ENCODE measurements at regions of chr17 and their contacts with region 1.

Region 1: GRCh38 chr17:36601303-36602029 is at the start of gene MRM1:
- DNase-seq: peak; percentile 46
- H3K4me3 ChIP-seq: peak within 1 kb of the TSS; percentile 97
- CTCF ChIP-seq: peak; percentile 38

Region 2: GRCh38 chr17:36545465-36546417 is 55.7 kb before region 1 on chr17:
- CTCF ChIA-PET with region 1: interaction called, 10 read pairs
- POLR2A ChIA-PET with region 1: interaction called, 3 read pairs
- DNase-seq: peak; percentile 84
- H3K4me3 ChIP-seq: peak overlapping the region; percentile 92
- CTCF ChIP-seq: no peak

Region 3: DNA sequence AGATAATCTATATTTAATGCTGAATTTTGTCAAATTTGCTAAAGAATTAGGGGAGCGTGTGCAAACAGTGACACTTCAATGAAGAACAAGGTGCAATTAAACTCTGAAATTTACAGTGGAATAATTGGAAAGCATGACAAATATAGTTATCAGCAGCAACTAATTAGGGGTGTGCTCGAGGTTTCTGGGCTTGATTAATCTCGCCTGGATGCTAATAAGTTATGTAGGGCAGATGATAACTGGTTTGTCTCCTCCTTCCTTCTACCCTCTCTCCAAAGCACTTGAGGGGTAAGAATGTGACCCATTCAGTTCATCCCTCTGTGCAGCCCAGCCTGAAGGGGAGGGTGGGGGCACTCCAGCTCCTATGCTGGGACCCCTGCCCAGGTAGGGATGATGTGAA is 21.8 kb after region 1 on chr17:
- CTCF ChIA-PET with region 1: interaction called, 27 read pairs
- POLR2A ChIA-PET with region 1: no interaction called
- DNase-seq: no peak
- H3K4me3 ChIP-seq: no peak overlapping the region
- CTCF ChIP-seq: no peak

Region 4: GRCh38 chr17:36650096-36650775 is 48.8 kb after region 1 on chr17:
- CTCF ChIA-PET with region 1: no interaction called
- POLR2A ChIA-PET with region 1: no interaction called
- DNase-seq: no peak
- H3K4me3 ChIP-seq: no peak overlapping the region
- CTCF ChIP-seq: no peak

Region 5: GRCh38 chr17:37176723-37177122 is 575.3 kb after region 1 on chr17:
- CTCF ChIA-PET with region 1: interaction called, 14 read pairs
- POLR2A ChIA-PET with region 1: no interaction called
- DNase-seq: no peak
- H3K4me3 ChIP-seq: no peak overlapping the region
- CTCF ChIP-seq: no peak

Region 6: DNA sequence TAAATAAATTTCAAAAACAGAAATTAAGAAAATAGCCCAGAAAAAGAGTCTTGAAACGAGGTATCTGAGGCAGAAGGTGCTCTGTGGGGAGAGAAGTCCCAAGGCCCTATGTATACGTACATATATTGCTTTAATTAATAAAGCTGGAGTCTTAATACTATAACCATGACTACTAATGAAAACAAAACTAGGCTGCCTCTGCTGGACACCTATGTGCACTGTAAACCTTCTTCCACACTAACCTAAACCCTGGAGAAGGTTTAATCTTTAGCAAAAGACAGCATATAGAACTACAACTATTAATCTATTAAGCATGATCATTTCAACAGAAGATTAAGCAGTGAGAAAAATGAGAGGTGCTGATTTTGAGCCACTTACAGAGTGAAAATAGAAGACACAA is 620.4 kb after region 1 on chr17:
- CTCF ChIA-PET with region 1: interaction called, 18 read pairs
- POLR2A ChIA-PET with region 1: no interaction called
- DNase-seq: no peak
- H3K4me3 ChIP-seq: no peak overlapping the region
- CTCF ChIP-seq: no peak

Region 7: DNA sequence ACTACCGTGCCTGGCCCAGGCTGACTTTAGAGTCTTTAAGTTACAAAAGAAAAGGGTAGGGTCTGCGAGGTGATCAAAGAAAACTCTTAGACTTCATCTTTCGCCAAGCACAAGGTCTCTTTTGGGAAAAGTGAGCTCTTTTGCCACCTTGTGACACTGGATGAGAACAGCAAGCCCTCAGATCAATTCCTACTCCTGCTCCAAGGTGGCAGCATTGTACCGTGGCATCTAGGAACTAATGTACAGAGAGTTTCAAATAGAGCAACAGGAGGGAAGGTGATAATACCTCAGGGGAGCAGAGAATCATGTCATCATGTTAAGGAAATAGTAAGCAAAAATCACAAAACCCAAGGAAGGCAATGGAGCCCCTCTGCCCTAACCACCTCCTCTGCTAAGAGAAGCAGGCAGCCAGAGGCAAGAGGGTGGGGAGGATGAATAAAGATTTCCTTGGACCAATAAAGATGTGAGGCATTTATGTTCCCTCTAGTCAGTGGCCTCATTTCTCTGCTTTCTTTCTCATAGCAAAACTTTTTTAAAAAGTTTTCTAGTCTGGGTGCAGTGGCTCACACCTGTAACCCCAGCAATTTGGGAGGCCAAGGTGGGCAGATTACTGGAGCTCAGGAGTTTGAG is 772.2 kb after region 1 on chr17:
- CTCF ChIA-PET with region 1: interaction called, 28 read pairs
- POLR2A ChIA-PET with region 1: no interaction called
- DNase-seq: peak; percentile 42
- H3K4me3 ChIP-seq: no peak overlapping the region
- CTCF ChIP-seq: peak; percentile 99

Measured in AG04449 (cell line).